ENCODE measurements at regions of chr5 and their contacts with region 1.

Region 1: GRCh38 chr5:138083702-138084101 is at the start of gene WNT8A:
- DNase-seq: no peak
- ATAC-seq: no peak
- H3K4me3 ChIP-seq: no peak within 1 kb of the TSS
- H3K27ac ChIP-seq: no peak within 1 kb of the TSS
- H3K4me1 ChIP-seq: no peaks in the 10 kb centered on the region
- H3K27me3 ChIP-seq: no peaks in the 10 kb centered on the region
- CTCF ChIP-seq: no peak
- polyA plus RNA-seq, gene WNT8A: not detected

Region 2: GRCh38 chr5:138138949-138139780 is 55.5 kb after region 1 on chr5 and contains the start of gene NME5:
- intact Hi-C with region 1: loop called in 1 of 2 experiments (anchors 10 kb)
- DNase-seq: peak; percentile 39 to 85 (median 76)
- ATAC-seq: peak; percentile 97
- H3K4me3 ChIP-seq: peak within 1 kb of the TSS; percentile 49 to 59
- H3K27ac ChIP-seq: no peak within 1 kb of the TSS
- H3K4me1 ChIP-seq: peaks cover 9 to 13% of the 10 kb centered on the region in 2 donors
- H3K27me3 ChIP-seq: peaks cover 0 to 27% of the 10 kb centered on the region in 2 donors
- CTCF ChIP-seq: no peak
- polyA plus RNA-seq, gene NME5: 8.3 to 13.0 (median 12.2) TPM

Measured in left lung (tissue), 14 donors.